HepG2 (cell line): ENCODE measurements at regions of chr13 and their contacts with region 1.

Region 1: DNA sequence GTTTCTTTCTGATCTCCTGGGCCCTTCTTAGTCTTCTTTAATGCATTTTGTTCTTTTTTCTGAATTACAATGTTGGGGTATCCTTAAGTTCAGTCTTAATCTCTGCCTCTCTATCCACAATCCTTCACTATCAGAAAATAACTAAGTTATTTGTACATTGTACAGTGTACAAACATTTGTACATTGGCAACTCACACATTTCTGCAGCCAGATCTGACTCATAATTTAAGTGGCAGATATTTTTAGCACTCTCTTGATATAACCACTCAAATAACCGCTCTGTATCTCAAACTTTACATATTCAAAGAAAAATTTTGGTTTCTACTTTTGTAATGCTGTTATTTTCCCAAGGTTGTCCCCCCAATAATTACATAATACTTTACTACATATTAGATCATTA is 691.1 kb upstream of the SPRY2 start:
- DNase-seq: no peak
- ATAC-seq: no peak
- H3K4me3 ChIP-seq: no peak overlapping the region
- H3K27ac ChIP-seq: no peak overlapping the region
- H3K4me1 ChIP-seq: no peaks in the 10 kb centered on the region
- H3K27me3 ChIP-seq: no peaks in the 10 kb centered on the region
- CTCF ChIP-seq: no peak
- EP300 ChIP-seq: no peak
- POLR2A ChIP-seq: no peak
- RAD21 ChIP-seq: no peak

Region 2: GRCh38 chr13:82522872-82523271 is 1490.9 kb after region 1 on chr13:
- CTCF ChIA-PET with region 1: no interaction called
- POLR2A ChIA-PET with region 1: no interaction called
- in situ Hi-C with region 1: no loop called
- intact Hi-C with region 1: loop called (anchors 5 kb)
- DNase-seq: no peak
- ATAC-seq: no peak
- H3K4me3 ChIP-seq: no peak overlapping the region
- H3K27ac ChIP-seq: no peak overlapping the region
- H3K4me1 ChIP-seq: no peaks in the 10 kb centered on the region
- H3K27me3 ChIP-seq: no peaks in the 10 kb centered on the region
- CTCF ChIP-seq: no peak
- EP300 ChIP-seq: no peak
- POLR2A ChIP-seq: no peak
- RAD21 ChIP-seq: no peak